ENCODE measurements at regions of chr22 and their contacts with region 1.

Region 1: DNA sequence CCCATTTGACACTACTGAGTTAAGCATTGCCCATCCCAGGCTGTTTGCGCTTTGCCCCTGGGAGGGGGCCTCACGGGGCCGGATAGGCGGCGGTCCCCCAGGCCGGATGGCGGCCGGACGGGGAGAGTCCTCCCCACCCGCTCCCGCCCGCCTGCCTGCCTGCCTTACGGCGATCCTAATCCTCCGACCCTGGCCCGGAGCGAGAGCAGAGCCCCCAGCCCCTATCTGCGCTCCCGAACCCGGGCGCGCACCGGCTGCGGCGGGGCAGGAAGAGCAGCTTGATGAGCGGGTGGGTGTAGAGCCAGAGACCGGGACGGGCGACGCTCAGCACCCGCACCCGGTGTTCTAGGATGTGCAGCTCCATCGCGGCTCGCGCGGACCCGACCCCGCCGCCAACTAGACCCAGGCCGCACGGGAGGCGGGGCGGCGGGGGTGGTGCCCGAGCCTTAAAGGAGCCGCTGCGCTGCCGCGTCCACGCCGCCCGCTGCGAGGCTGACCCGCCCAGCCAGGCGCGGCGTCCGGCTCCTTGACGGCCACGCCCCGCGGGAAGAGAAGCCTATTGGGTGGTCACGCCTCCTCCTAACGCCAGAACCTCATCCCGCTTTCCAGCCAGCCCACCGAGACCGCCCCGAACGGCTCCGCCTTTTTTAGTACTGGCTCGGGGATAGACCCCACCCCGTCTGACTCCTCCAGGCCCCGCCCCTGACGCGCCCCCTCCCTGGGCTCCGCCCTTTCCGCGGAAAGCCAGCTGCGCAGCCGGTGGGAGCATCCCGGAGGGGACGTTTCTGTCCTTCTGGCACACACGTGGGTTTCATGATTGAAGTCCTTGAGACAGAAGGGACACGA is at the start of gene CASTOR1:
- DNase-seq: peak; percentile 99
- ATAC-seq: peak; percentile 93 to 95 (median 94)
- H3K4me3 ChIP-seq: peak within 1 kb of the TSS; percentile 94
- H3K27ac ChIP-seq: peak within 1 kb of the TSS; percentile 76
- H3K4me1 ChIP-seq: peaks cover 22% of the 10 kb centered on the region
- H3K27me3 ChIP-seq: no peaks in the 10 kb centered on the region
- CTCF ChIP-seq: no peak
- total RNA-seq, gene CASTOR1: 0.44 to 4.8 (median 2.2) TPM

Region 2: GRCh38 chr22:29481612-29482011 is 807.7 kb before region 1 on chr22:
- intact Hi-C with region 1: no loop called
- DNase-seq: peak in 1 of 2 donors; percentile 27
- ATAC-seq: no peak
- H3K4me3 ChIP-seq: peak overlapping the region; percentile 42
- H3K27ac ChIP-seq: no peak overlapping the region
- H3K4me1 ChIP-seq: peaks cover 13% of the 10 kb centered on the region
- H3K27me3 ChIP-seq: peaks cover 0 to 62% (median 38%) of the 10 kb centered on the region in 3 donors
- CTCF ChIP-seq: no peak

Region 3: GRCh38 chr22:30104501-30105156 is 184.7 kb before region 1 on chr22:
- intact Hi-C with region 1: loop called in 1 of 2 experiments (anchors 2 kb)
- DNase-seq: no peak
- ATAC-seq: no peak
- H3K4me3 ChIP-seq: no peak overlapping the region
- H3K27ac ChIP-seq: no peak overlapping the region
- H3K4me1 ChIP-seq: no peaks in the 10 kb centered on the region
- H3K27me3 ChIP-seq: peaks cover 0 to 9% (median 2%) of the 10 kb centered on the region in 3 donors
- CTCF ChIP-seq: no peak

Region 4: DNA sequence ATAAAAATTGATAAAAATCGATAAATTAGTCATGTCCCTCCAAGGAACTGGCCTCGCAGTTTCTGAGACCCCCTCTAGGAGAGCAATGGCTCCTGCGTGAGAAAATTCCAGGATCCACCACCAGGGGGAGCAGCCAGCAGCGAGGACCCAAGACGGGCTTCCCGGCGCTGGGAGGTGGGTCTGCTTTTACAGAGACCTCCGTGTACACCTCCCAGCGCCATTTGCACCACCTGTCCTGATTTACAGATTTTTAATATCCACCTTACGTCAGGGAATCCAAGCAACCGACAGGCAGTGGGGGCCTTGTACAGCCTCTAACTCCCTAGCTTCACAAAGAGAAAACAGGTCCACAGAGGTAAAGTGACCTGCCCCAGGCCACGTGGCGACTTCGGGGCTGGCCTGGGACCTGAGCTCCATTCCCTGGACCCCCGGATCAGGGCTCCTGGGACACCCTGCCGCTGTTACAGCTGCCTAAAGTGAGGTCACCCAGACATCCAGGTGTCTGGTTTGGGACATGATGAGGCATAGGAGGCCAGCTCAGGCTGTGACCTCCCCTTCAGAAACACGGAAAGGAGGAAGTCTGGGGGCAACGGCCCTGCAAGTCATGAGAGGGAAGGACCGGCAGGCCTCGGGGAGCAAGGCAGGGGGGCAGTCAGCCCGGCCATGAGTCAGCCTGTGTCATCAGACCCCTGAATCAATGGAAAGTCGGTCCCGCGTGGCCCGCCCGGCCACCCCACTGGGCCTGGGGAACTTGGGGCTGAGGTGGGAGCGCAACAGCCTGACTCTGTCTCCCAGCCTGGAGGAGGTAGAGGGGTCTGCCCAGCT is 26.2 kb before region 1 on chr22:
- intact Hi-C with region 1: loop called in 1 of 2 experiments (anchors 1 kb)
- DNase-seq: peak; percentile 73 to 85
- ATAC-seq: peak; percentile 60 to 87 (median 70)
- H3K4me3 ChIP-seq: peak overlapping the region; percentile 37
- H3K27ac ChIP-seq: no peak overlapping the region
- H3K4me1 ChIP-seq: no peaks in the 10 kb centered on the region
- H3K27me3 ChIP-seq: no peaks in the 10 kb centered on the region
- CTCF ChIP-seq: peak; percentile 98

Region 5: GRCh38 chr22:30326706-30327362 is 37.5 kb after region 1 on chr22 and contains the start of gene TBC1D10A:
- intact Hi-C with region 1: loop called in 1 of 2 experiments (anchors 5 kb)
- DNase-seq: peak; percentile 90 to 93
- ATAC-seq: peak; percentile 95 to 98 (median 96)
- H3K4me3 ChIP-seq: peak within 1 kb of the TSS; percentile 88
- H3K27ac ChIP-seq: peak within 1 kb of the TSS; percentile 54
- H3K4me1 ChIP-seq: peaks cover 23% of the 10 kb centered on the region
- H3K27me3 ChIP-seq: no peaks in the 10 kb centered on the region
- CTCF ChIP-seq: no peak
- total RNA-seq, gene TBC1D10A: 2.9 to 4.8 (median 3.3) TPM

Region 6: DNA sequence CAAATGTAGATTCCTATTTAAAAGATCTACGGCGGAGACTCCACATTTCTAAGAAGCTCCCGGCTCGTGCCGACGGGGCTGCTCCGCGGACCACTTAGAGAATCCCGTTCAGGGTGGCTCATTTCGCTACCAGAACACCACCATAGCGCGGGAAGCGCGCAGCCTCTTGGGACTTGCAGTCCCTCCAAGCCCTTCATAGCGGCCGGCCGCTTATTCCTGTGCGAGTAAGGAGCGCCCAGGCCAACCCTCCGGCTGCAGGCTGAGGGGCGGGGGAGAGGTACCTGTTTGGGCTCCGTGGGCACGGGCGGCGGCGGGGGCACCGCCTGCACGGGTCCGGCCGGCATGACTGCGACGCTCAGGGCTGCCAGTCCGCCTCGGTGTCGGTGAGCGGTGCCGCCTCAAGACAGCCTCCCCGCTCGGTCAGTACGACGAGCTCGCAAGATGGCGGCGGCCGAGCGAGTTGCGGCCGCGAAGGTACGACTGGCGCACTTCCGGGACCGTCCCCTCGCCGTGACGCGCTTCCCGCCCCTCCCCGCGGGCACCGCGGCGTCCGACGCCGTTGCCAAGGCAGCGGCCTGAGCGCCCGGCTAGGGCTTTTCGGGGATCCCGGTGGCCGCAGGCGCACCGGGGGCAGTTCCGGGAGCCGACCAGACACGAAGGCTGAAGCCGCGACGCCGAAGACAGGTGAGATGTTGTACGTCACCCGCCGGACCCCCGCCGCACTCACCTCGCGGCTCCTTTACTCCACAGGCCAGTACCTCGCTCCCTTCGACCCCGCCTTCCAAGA is 67.3 kb after region 1 on chr22 and contains the starts of genes CCDC157 and SF3A1:
- intact Hi-C with region 1: loop called in 1 of 2 experiments (anchors 1 kb)
- DNase-seq: peak; percentile 89 to 94
- ATAC-seq: peak; percentile 98 to 99 (median 98)
- H3K4me3 ChIP-seq: peak within 1 kb of the TSS; percentile 83
- H3K27ac ChIP-seq: peak within 1 kb of the TSS; percentile 98
- H3K4me1 ChIP-seq: peaks cover 25% of the 10 kb centered on the region
- H3K27me3 ChIP-seq: no peaks in the 10 kb centered on the region
- CTCF ChIP-seq: no peak
- total RNA-seq, gene CCDC157: 0.17 to 0.88 (median 0.54) TPM
- total RNA-seq, gene SF3A1: 107 to 146 (median 121) TPM

Region 7: GRCh38 chr22:30386960-30387827 is 97.8 kb after region 1 on chr22 and contains the start of gene RNF215:
- intact Hi-C with region 1: loop called (anchors 1 to 2 kb)
- DNase-seq: peak; percentile 85 to 92
- ATAC-seq: peak; percentile 93 to 97 (median 95)
- H3K4me3 ChIP-seq: peak within 1 kb of the TSS; percentile 70
- H3K27ac ChIP-seq: peak within 1 kb of the TSS; percentile 60
- H3K4me1 ChIP-seq: peaks cover 8% of the 10 kb centered on the region
- H3K27me3 ChIP-seq: no peaks in the 10 kb centered on the region
- CTCF ChIP-seq: peak; percentile 99
- total RNA-seq, gene RNF215: 5.7 to 9.8 (median 8.2) TPM

Measured in psoas muscle (tissue), 8 donors.